Dorsolateral prefrontal cortex (tissue), 120 donors: ENCODE measurements at regions of chr12 and their contacts with region 1.

Region 1: GRCh38 chr12:122021822-122022526 is at the start of gene BCL7A:
- DNase-seq: peak; percentile 66 to 84 (median 76)
- H3K4me3 ChIP-seq: peak within 1 kb of the TSS; percentile 67 to 91 (median 78)
- H3K27ac ChIP-seq: peak within 1 kb of the TSS; percentile 44 to 94 (median 87)
- H3K27me3 ChIP-seq: no peaks in the 10 kb centered on the region
- CTCF ChIP-seq: peak in 1 of 56 donors; percentile 12
- total RNA-seq, gene BCL7A: 25.2 to 50.3 (median 39.4) TPM

Region 2: DNA sequence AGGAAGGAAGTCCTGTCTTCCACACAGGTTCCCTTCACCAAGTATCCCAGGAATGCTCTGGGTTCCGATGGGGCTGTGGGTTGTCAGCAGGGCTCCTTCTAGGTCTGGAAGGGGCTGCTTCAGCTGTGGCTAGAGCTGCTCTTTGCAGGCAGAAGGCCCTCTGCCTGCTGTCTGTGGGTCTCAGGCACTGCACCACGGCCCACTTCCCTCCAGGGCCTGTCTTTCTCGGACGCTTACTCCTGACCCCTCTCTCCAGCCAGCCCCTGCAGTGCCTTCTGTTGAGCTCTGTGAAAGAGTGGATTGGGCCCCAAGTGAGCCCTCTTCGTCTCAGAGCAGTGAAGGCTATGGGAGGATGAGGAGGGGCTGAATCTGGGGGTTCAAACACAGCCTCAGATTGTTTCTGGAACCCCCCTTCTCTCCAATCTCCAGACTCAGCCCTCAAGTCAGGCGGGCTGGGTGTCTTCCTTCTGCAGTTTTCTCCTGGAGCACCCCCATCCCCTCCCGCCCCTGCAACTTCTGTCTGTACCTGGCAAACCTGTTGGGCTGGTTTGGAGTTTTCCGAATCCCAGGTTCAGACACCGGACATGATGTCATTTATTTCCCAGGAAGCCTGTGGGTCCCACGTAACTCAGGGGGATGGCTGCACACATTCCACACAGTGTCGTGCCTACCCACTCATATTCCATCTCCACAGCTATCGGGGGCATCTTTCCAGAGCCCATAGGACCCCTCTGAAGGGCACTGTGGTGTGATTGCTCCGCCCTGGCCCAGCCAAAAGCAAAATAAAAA is 1092.9 kb before region 1 on chr12:
- intact Hi-C with region 1: no loop called
- DNase-seq: no peak
- H3K4me3 ChIP-seq: no peak overlapping the region
- H3K27ac ChIP-seq: no peak overlapping the region
- H3K27me3 ChIP-seq: no peaks in the 10 kb centered on the region
- CTCF ChIP-seq: no peak

Region 3: GRCh38 chr12:121712461-121713256 is 309.3 kb before region 1 on chr12 and contains the start of gene TMEM120B:
- intact Hi-C with region 1: loop called in 1 of 2 experiments (anchors 10 kb)
- DNase-seq: peak; percentile 72 to 93 (median 85)
- H3K4me3 ChIP-seq: peak within 1 kb of the TSS; percentile 62 to 99 (median 96)
- H3K27ac ChIP-seq: peak within 1 kb of the TSS in 48 of 59 donors; percentile 16 to 88 (median 70)
- H3K27me3 ChIP-seq: no peaks in the 10 kb centered on the region
- CTCF ChIP-seq: peak in 4 of 56 donors; percentile 11 to 17 (median 13)
- total RNA-seq, gene TMEM120B: 10.0 to 30.1 (median 19.2) TPM

Region 4: GRCh38 chr12:121793838-121794533 is 228.0 kb before region 1 on chr12:
- intact Hi-C with region 1: loop called in 1 of 2 experiments (anchors 5 kb)
- DNase-seq: peak; percentile 69 to 93 (median 86)
- H3K4me3 ChIP-seq: peak overlapping the region; percentile 32 to 76 (median 61)
- H3K27ac ChIP-seq: peak overlapping the region in 54 of 59 donors; percentile 9 to 100 (median 100)
- H3K27me3 ChIP-seq: no peaks in the 10 kb centered on the region
- CTCF ChIP-seq: peak in 55 of 56 donors; percentile 77 to 100 (median 98)

Region 5: GRCh38 chr12:121802846-121803630 is 218.9 kb before region 1 on chr12:
- intact Hi-C with region 1: loop called (anchors 5 to 10 kb)
- DNase-seq: peak; percentile 89 to 98 (median 94)
- H3K4me3 ChIP-seq: peak overlapping the region; percentile 53 to 92 (median 77)
- H3K27ac ChIP-seq: peak overlapping the region; percentile 99 to 100 (median 100)
- H3K27me3 ChIP-seq: no peaks in the 10 kb centered on the region
- CTCF ChIP-seq: peak in 7 of 56 donors; percentile 5 to 21 (median 15)

Region 6: DNA sequence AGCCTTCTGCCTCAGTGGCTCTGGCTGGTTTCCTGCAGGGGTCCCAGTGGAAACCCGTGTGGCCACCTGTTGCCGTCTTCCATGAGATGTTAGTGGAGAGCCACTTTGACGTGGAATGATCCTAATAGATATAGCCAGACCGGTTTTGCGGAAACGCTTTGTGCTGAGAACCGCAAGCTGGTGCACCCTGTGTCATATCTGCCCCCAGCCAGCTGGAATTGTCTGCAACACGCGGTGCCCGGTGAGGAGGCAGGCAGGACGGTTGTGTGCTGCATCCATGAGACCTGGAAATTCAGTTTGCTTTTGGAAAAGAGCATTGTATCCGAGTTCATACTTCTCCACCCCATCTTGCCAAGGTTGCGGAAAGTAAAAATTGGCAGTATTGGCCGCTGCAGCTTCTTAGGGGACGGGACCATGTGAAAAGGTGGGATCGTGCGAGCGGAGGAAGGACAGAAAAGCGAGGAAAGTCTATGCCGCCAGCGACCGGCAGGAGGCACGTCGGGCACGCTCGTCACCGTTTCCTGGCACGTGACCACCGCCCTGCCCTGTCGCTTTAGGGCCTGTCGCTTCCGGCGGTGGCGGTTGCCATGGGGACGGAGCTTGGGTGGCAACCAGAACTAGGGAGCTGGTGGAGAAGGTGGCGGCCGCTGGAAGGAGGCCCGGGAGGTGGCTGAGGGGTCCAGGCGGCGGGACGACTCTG is 103.8 kb before region 1 on chr12 and contains the start of gene CFAP251:
- intact Hi-C with region 1: loop called (anchors 5 kb)
- DNase-seq: peak; percentile 86 to 98 (median 93)
- H3K4me3 ChIP-seq: peak within 1 kb of the TSS; percentile 42 to 79 (median 62)
- H3K27ac ChIP-seq: peak within 1 kb of the TSS in 53 of 59 donors; percentile 4 to 83 (median 53)
- H3K27me3 ChIP-seq: no peaks in the 10 kb centered on the region
- CTCF ChIP-seq: peak in 55 of 56 donors; percentile 17 to 95 (median 67)
- total RNA-seq, gene CFAP251: 3.0 to 12.4 (median 6.6) TPM

Region 7: GRCh38 chr12:121955258-121956235 is 66.4 kb before region 1 on chr12:
- intact Hi-C with region 1: loop called in 1 of 2 experiments (anchors 5 kb)
- DNase-seq: no peak
- H3K4me3 ChIP-seq: peak overlapping the region in 16 of 59 donors; percentile 4 to 44 (median 23)
- H3K27ac ChIP-seq: no peak overlapping the region
- H3K27me3 ChIP-seq: no peaks in the 10 kb centered on the region
- CTCF ChIP-seq: peak in 54 of 56 donors; percentile 25 to 68 (median 52)

Region 8: DNA sequence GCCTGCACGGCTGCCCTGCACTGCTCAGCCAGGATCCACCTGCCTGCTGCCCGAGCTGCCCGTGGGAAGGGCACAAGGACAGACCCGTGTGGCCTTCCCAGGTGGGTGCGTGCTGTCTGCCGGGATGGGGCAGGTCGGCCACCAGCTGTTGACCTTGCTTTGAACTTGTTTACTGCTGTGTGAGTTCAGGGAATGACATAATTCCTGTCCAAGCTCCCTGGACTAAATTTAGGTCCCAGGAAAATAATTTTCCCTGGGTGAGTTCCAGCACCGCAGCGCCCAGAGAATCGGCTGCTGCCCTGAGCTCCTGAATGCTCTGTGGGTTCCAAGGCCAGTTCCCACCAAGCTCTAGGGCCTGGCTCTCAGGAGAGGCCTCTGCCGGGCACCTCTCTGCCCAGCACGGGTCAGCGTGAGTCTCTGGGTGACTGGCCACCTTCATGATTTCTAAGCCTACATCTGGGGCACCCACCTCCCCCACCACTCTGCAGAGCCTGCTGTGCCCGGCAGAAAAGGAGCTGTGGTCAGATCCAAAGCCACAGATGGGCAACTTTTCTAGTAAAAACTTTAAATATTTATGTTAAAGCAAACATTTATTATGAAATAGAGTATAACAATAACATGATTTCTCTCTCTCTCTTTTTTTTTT is 29.4 kb after region 1 on chr12:
- intact Hi-C with region 1: loop called in 1 of 2 experiments (anchors 2 kb)
- DNase-seq: peak in 1 of 10 donors; percentile 23
- H3K4me3 ChIP-seq: peak overlapping the region in 1 of 59 donors; percentile 4
- H3K27ac ChIP-seq: peak overlapping the region in 55 of 59 donors; percentile 21 to 89 (median 72)
- H3K27me3 ChIP-seq: no peaks in the 10 kb centered on the region
- CTCF ChIP-seq: no peak

Region 9: DNA sequence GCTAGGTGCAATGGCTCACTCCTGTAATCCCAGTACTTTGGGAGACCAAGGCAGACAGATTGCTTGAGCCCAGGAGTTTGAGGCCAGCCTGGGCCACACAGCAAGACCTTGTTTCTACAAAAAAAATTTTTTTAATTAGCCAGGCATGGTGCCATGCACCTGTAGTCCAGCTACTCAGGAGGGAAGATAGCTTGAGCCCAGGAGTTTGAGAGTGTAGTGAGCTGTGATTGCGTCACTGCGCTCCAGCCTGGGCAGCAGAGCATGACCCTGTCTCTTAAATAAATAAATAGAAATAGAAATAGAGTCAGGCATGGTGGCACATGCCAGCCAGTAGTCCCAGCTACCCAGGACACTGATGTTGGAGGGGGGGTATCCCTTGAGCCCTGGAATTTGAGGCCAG is 437.2 kb after region 1 on chr12:
- intact Hi-C with region 1: no loop called
- DNase-seq: peak in 1 of 10 donors; percentile 54
- H3K4me3 ChIP-seq: no peak overlapping the region
- H3K27ac ChIP-seq: no peak overlapping the region
- H3K27me3 ChIP-seq: no peaks in the 10 kb centered on the region
- CTCF ChIP-seq: no peak